AG04450 (cell line): ENCODE measurements at regions of chr20 and their contacts with region 1.

Region 1: GRCh38 chr20:41232973-41233926 is 84.3 kb downstream of the ZHX3 start:
- DNase-seq: peak; percentile 86
- H3K4me3 ChIP-seq: no peak overlapping the region
- H3K27ac ChIP-seq: peak overlapping the region; percentile 86
- H3K27me3 ChIP-seq: no peaks in the 10 kb centered on the region
- CTCF ChIP-seq: no peak

Region 2: DNA sequence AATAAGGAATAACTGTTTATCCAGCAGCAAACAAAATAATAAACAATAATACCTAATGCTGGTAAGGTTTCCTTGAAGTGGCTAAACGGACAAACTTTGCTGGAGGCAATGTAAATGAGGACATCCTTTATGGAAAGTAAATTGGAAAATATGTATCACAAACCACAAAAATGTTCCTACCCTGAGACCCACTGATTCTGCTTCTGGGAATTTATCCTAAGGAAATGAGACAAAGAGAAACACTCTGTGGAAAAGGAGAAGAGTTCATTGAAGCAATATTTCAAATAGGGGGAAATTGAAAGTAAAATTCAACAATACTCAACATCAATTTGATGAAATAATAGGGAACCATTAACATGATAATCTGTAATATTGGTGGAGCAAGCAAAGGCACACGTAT is 582.1 kb before region 1 on chr20:
- CTCF ChIA-PET with region 1: no interaction called
- POLR2A ChIA-PET with region 1: no interaction called
- DNase-seq: no peak
- H3K4me3 ChIP-seq: no peak overlapping the region
- H3K27ac ChIP-seq: no peak overlapping the region
- H3K27me3 ChIP-seq: peaks cover 5% of the 10 kb centered on the region
- CTCF ChIP-seq: no peak

Region 3: GRCh38 chr20:40956542-40957264 is 276.5 kb before region 1 on chr20:
- CTCF ChIA-PET with region 1: no interaction called
- POLR2A ChIA-PET with region 1: no interaction called
- DNase-seq: no peak
- H3K4me3 ChIP-seq: no peak overlapping the region
- H3K27ac ChIP-seq: no peak overlapping the region
- H3K27me3 ChIP-seq: peaks cover 4% of the 10 kb centered on the region
- CTCF ChIP-seq: no peak

Region 4: DNA sequence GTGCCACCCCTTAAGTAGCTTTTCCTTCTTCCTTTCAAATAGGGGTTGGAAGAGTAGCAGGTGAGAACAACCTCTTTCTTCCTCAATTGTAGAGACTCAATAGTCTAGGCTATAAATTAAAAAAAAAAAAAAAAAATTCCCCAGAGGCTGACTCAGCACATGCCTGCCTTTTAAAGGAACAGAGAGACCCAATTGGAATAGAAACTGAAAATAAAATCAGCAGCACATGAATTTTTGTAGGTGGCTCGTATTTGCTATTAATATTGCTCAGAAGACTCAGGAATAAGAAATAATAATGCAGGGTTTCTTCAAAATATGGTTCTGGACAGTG is 185.3 kb before region 1 on chr20:
- CTCF ChIA-PET with region 1: no interaction called
- POLR2A ChIA-PET with region 1: no interaction called
- DNase-seq: no peak
- H3K4me3 ChIP-seq: peak overlapping the region; percentile 29
- H3K27ac ChIP-seq: no peak overlapping the region
- H3K27me3 ChIP-seq: no peaks in the 10 kb centered on the region
- CTCF ChIP-seq: no peak

Region 5: GRCh38 chr20:41173161-41173721 is 60.0 kb before region 1 on chr20:
- CTCF ChIA-PET with region 1: interaction called, 27 read pairs
- POLR2A ChIA-PET with region 1: interaction called, 6 read pairs
- DNase-seq: peak; percentile 72
- H3K4me3 ChIP-seq: no peak overlapping the region
- H3K27ac ChIP-seq: peak overlapping the region; percentile 21
- H3K27me3 ChIP-seq: no peaks in the 10 kb centered on the region
- CTCF ChIP-seq: peak; percentile 99

Region 6: DNA sequence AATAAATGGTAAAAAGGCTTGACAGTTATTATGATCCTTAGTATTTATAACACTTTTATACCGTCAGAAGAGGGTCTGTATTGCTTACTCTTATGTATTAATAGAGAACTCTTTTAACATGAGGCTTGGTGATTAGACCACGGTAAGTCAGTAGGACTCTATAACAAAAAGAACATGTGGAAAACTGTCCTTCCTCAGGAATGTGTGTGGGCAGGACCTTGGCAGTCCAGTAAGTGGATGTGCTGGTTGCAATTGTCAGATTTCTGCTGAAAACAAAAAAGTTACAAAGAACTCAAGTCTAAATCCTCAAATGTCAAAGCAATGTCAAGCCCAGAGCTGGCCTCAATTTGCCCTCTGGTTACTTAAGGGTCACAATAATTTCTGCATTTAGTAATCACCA is 14.8 kb before region 1 on chr20:
- CTCF ChIA-PET with region 1: interaction called, 43 read pairs
- POLR2A ChIA-PET with region 1: no interaction called
- DNase-seq: peak; percentile 11
- H3K4me3 ChIP-seq: no peak overlapping the region
- H3K27ac ChIP-seq: no peak overlapping the region
- H3K27me3 ChIP-seq: no peaks in the 10 kb centered on the region
- CTCF ChIP-seq: no peak

Region 7: DNA sequence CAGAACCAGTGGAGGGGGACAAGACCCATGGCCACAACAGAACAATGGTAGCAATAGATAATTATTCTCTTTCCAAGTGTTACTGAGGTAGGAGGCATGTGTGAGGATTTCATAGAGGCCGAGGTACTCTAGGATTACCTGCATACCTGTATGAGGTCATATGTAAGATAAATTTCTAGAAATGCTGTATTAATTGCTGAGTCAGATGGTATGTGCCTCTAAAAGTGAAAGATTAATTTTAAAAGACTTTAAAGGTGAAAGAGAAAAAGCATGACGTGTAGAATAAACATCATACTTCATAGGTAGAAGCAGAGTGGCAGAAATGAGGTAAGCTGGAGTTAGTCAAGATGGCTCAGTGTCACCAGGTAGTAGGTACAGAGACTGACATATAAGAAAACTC is 32.7 kb after region 1 on chr20:
- CTCF ChIA-PET with region 1: interaction called, 11 read pairs
- POLR2A ChIA-PET with region 1: no interaction called
- DNase-seq: no peak
- H3K4me3 ChIP-seq: no peak overlapping the region
- H3K27ac ChIP-seq: no peak overlapping the region
- H3K27me3 ChIP-seq: no peaks in the 10 kb centered on the region
- CTCF ChIP-seq: no peak

Region 8: GRCh38 chr20:41286240-41286851 is 53.1 kb after region 1 on chr20:
- CTCF ChIA-PET with region 1: no interaction called
- POLR2A ChIA-PET with region 1: no interaction called
- DNase-seq: no peak
- H3K4me3 ChIP-seq: no peak overlapping the region
- H3K27ac ChIP-seq: no peak overlapping the region
- H3K27me3 ChIP-seq: no peaks in the 10 kb centered on the region
- CTCF ChIP-seq: no peak